ENCODE measurements at regions of chr14 and their contacts with region 1.

Region 1: DNA sequence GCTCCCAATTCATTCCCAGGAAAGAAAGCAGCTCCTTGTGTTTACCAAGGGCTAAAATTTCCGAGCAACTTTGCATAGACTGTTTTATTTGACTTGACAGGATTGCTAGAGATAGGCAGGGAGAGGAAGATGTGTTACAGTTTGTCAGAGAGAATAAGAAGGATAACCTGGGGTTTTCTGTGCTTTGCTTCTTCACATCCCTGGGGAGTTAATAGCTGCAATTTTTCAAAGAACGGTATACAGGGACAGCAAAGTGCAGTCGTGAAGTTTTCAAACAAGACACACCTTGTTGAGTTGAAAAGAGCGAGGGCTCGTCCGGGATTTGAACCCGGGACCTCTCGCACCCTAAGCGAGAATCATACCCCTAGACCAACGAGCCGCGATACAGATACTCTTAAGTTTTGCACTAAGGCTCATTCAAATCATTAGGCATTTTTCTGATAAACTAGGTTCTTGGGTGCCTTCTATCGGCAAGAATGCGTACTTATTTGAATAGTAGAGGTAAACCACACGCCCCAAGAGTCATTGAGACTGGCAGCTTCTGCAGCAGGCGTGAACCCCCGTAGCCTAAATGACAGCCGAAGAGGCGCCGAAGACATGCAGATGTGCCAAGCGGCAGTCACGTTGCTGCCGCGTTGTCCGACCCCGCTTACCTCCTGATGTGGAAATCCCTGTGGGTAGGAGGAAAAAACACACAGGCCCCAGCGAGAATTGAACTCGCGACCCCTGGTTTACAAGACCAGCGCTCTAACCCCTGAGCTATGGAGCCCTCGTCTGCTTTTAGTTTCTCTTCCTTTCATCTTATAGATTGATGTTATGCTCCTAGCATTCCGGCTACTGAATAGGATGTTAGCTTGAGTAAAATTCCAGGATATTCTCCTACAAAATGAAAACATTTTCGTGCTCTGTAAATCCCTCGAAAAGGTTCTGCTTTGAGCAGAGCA is 22.2 kb upstream of the RNASE12 start:
- DNase-seq: peak; percentile 91
- ATAC-seq: peak; percentile 87
- H3K4me3 Mint-ChIP-seq: no peak overlapping the region
- H3K27ac Mint-ChIP-seq: no peak overlapping the region
- H3K4me1 Mint-ChIP-seq: peaks cover 8% of the 10 kb centered on the region
- H3K27me3 Mint-ChIP-seq: no peaks in the 10 kb centered on the region

Region 2: GRCh38 chr14:20327005-20327869 is 286.1 kb before region 1 on chr14:
- CTCF ChIA-PET with region 1: interaction called, 61 read pairs
- POLR2A ChIA-PET with region 1: no interaction called
- intact Hi-C with region 1: loop called (anchors 1 kb)
- DNase-seq: no peak
- ATAC-seq: peak; percentile 71
- H3K4me3 Mint-ChIP-seq: no peak overlapping the region
- H3K27ac Mint-ChIP-seq: peak overlapping the region; percentile 44
- H3K4me1 Mint-ChIP-seq: peaks cover 37% of the 10 kb centered on the region
- H3K27me3 Mint-ChIP-seq: no peaks in the 10 kb centered on the region

Region 3: DNA sequence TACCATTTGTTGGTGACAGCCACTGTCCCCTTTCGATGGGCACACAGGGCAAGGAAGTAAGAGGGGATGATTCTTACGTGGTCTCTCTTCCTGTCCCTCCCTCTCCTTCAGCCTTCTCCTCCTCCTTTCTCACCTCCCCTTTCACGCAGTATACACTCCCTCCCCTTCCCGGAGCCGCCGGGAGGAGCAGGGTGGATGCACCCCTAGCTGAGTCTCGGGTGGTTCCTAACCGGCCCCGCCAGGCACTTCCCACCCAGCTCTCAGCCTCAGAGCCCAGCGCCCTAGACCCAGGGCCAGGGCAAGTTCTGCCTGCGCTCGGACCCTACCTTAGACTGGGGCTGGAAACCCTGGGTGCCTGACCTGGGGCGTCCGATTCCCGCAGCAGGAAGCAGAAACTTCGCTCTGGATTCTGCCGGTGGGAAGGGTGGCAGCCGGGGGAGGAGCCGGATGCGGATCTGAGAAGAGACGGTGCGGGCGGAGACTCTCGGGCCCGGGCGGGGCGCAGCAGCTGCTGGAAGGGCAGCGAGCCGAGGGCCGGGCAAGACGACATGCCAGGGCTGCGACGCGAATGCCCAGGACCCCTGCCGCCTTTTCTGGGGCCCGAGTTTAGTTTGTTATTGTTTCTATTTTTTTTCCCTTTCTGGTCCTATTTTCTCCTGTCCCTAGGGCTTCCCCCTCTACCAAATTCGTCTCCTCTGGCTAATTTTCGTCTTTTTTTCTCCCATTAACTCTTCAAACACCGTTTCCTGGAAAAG is 200.1 kb before region 1 on chr14 and contains the start of gene TEP1:
- CTCF ChIA-PET with region 1: interaction called, 16 read pairs
- POLR2A ChIA-PET with region 1: no interaction called
- intact Hi-C with region 1: loop called (anchors 1 to 2 kb)
- DNase-seq: peak; percentile 87
- ATAC-seq: peak; percentile 82
- H3K4me3 Mint-ChIP-seq: peak within 1 kb of the TSS; percentile 82
- H3K27ac Mint-ChIP-seq: peak within 1 kb of the TSS; percentile 94
- H3K4me1 Mint-ChIP-seq: peaks cover 37% of the 10 kb centered on the region
- H3K27me3 Mint-ChIP-seq: no peaks in the 10 kb centered on the region
- total RNA-seq, gene TEP1: 29.2 to 40.1 TPM

Region 4: GRCh38 chr14:20469242-20469889 is 144.0 kb before region 1 on chr14 and contains the start of gene PNP:
- CTCF ChIA-PET with region 1: interaction called, 5 read pairs
- POLR2A ChIA-PET with region 1: interaction called, 3 read pairs
- intact Hi-C with region 1: loop called (anchors 1 to 5 kb)
- DNase-seq: peak; percentile 93
- ATAC-seq: peak; percentile 93
- H3K4me3 Mint-ChIP-seq: peak within 1 kb of the TSS; percentile 91
- H3K27ac Mint-ChIP-seq: peak within 1 kb of the TSS; percentile 97
- H3K4me1 Mint-ChIP-seq: peaks cover 37% of the 10 kb centered on the region
- H3K27me3 Mint-ChIP-seq: no peaks in the 10 kb centered on the region
- total RNA-seq, gene PNP: 160 to 164 TPM

Region 5: DNA sequence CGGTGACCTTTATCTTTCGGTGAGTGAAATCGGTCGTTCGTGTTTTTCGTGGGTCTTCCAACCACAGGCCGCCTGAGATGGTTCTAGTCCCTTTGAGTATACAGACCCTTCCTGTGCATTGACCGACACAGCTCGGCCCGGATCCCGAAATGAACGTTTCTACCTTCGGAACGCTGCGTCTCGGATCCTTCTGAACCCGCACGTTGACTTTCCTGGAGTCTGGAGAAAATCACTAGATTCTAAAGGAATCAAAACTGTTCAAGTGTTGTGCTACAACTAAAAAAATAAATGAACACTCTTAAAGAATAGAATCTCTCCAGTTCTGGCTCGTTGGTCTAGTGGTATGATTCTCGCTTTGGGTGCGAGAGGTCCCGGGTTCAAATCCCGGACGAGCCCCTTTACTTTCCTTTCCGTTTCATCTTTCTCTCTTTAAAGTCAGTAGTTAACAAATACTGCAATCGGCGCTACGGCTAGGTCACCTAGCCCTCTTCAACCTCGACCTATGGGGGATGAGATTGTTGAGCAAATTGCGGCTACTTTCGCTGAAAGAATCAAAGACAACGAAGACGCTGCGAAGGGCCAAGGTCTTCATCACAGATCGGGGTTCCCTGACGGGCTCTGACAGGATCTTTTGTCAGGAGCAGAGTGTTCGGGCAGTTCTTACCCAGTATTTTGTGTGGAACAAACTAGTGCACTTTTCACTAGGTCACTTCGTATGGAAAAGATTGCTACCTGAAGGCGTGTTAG is 19.5 kb after region 1 on chr14:
- CTCF ChIA-PET with region 1: interaction called, 33 read pairs
- POLR2A ChIA-PET with region 1: interaction called, 4 read pairs
- intact Hi-C with region 1: loop called (anchors 1 kb)
- DNase-seq: peak; percentile 88
- ATAC-seq: peak; percentile 85
- H3K4me3 Mint-ChIP-seq: peak overlapping the region; percentile 75
- H3K27ac Mint-ChIP-seq: peak overlapping the region; percentile 43
- H3K4me1 Mint-ChIP-seq: peaks cover 45% of the 10 kb centered on the region
- H3K27me3 Mint-ChIP-seq: peaks cover 10% of the 10 kb centered on the region

Region 6: DNA sequence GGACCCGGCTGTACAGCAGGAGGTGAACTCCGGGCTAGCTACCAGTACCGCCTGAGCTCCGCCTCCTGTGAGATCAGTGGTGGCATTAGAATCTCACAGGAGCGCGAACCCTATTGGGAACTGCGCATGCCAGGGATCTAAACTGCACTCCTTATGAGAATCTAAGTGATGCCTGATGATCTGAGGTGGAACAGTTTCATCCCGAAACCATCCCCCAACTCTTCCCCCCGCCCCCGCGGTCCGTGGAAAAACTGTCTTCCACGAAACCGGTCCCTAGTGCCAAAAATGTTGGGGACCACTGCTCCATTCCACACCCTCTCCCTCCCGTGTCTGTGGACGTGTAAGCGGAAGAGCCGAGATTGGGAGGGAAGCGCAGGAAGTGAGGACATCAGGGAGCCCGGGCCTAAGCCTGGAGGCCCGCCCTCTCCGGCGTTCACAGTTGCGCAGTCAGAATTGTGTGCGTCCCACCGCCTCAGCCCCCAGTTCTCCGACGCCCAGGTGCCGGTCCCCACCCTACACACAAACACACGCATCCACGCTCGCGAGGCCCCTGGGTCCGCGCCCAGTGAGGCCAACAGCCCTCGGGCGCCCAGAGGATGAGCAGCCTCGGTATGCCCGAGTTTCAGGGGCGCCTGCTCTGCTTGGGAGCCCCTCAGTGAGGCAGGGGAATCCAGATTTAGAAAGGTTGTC is 69.2 kb after region 1 on chr14:
- CTCF ChIA-PET with region 1: interaction called, 34 read pairs
- POLR2A ChIA-PET with region 1: interaction called, 6 read pairs
- intact Hi-C with region 1: loop called (anchors 1 kb)
- DNase-seq: peak; percentile 88
- ATAC-seq: peak; percentile 68
- H3K4me3 Mint-ChIP-seq: no peak overlapping the region
- H3K27ac Mint-ChIP-seq: no peak overlapping the region
- H3K4me1 Mint-ChIP-seq: peaks cover 30% of the 10 kb centered on the region
- H3K27me3 Mint-ChIP-seq: no peaks in the 10 kb centered on the region